Esophagus muscularis mucosa (tissue), 4 donors: ENCODE measurements at regions of chr3 and their contacts with region 1.

Region 1: DNA sequence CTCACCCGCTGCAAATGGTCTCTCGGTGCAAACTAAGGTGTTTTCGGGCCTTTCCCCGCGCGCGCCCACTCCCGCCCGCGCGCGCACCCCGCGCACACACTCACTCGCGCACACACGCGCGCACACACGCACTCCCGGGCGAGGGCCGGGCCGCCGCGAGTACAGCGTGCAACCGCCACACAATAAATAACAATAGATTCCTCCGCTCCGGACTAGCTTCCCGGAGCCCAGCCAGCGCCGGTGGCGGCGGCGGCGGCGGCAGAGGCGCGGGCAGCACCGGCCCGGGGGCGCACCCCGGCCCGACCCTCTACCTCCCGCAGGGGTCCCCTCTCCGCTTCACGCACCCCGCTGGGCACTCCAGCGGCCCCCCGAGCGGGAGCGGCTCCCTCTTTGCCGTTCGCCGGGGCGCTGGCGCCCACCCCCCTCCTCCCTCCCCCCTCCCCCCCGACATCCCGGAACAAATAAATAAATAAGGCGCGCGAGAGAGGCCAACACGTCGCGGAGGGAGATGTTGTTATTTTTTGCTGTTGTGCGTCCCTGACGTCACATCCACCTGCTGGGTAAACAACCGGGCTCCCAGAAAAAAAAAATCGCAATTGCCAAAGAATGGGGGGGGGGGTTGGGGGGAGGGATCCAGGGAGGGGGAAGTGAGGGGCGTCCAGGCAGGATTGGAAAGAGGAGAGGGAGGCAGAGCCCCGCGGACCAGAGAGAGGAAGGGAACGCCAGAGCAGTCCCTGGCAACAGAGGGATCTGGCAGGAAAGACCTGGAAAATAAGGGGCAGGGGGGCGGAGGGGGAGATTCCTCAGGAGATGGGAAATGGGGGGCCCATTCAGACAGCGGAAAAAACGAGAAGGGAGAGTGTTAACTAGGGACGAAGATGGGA is at the start of gene FOXP1:
- DNase-seq: peak; percentile 92
- H3K4me3 ChIP-seq: peak within 1 kb of the TSS; percentile 86 to 98 (median 90)
- H3K27ac ChIP-seq: peak within 1 kb of the TSS; percentile 96 to 100 (median 98)
- H3K4me1 ChIP-seq: peaks cover 5 to 48% (median 37%) of the 10 kb centered on the region in 4 donors
- H3K27me3 ChIP-seq: no peaks in the 10 kb centered on the region
- CTCF ChIP-seq: no peak
- EP300 ChIP-seq: no peak
- POLR2A ChIP-seq: peak; percentile 15
- total RNA-seq, gene FOXP1: 181 to 225 (median 205) TPM

Region 2: DNA sequence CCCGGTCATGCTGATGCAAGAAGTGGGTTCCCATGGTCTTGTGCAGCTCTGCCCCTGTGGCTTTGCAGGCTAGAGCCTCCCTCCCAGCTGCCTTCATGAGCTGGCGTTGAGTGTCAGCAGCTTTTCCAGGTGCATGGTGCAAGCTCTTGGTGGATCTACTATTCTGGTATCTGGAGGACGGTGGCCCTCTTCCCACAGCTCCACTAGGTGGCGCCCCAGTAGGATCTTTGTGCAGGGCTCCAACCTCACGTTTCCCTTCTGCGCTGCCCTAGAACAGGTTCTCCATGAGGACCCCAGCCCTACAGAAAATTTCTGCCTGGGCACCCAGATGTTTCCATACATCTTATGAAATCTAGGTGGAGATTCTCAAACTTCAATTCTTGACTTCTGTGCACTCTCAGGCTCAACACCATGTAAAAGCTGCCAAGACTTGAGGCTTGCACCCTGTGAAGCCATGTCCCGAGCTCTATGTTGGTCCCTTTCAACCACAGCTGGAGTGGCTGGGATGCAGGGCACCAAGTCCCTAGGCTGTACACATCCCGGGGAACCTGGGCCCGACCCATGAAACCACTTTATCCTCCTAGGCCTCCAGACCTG is 1033.0 kb before region 1 on chr3:
- intact Hi-C with region 1: loop called (anchors 5 kb)
- DNase-seq: no peak
- H3K4me3 ChIP-seq: no peak overlapping the region
- H3K27ac ChIP-seq: no peak overlapping the region
- H3K4me1 ChIP-seq: peaks cover 0 to 16% (median 3%) of the 10 kb centered on the region in 4 donors
- H3K27me3 ChIP-seq: no peaks in the 10 kb centered on the region
- CTCF ChIP-seq: peak; percentile 32 to 68 (median 48)
- EP300 ChIP-seq: no peak
- POLR2A ChIP-seq: no peak

Region 3: DNA sequence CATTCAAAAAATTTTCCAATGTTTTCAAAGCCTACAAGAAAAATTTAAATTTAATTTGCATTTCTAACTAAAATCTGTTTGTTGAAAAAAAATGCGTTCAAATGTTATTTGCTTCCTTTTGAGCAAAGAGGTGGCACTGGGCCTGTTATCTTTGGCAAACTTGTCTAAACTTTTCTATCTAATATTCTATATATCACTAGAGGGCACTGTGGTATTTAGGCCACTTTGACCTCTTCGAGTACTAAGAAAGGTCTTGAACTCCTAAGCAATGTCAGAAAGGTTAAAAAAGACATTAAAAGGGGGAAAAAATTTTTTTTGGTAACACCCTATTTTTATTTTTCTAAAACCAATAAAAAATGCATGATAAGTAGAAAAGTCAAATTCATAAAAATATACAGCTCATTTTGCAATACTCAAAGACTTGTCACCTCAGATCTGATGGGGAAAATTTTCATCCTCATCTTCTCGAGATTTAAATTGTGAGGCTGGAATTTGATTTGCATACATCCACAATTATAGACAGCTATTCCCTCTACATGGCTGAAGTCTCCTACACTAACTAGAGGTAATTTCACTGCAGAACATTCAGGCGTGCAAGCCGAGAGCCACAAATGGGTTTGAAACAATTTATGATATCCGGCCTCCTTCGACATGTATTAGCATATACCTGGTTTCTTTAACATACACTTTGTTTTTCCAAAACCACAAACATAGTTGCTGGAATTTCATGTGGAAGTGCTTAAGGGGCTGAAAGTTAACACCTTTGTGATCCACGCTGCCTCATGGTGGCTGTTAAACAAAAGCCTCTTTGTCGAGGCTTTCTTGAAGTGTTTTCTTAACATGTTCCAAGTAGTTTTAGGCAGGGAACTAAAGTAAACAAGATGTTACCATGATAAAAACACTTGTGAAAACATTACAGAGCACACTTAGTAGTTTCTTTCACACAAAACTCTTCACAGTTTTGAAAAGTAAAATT is 576.7 kb before region 1 on chr3:
- intact Hi-C with region 1: loop called (anchors 10 kb)
- DNase-seq: no peak
- H3K4me3 ChIP-seq: no peak overlapping the region
- H3K27ac ChIP-seq: peak overlapping the region; percentile 63 to 78 (median 74)
- H3K4me1 ChIP-seq: peaks cover 48 to 99% (median 97%) of the 10 kb centered on the region in 4 donors
- H3K27me3 ChIP-seq: no peaks in the 10 kb centered on the region
- CTCF ChIP-seq: peak; percentile 31 to 49 (median 40)
- EP300 ChIP-seq: no peak
- POLR2A ChIP-seq: no peak

Region 4: GRCh38 chr3:71130471-71131374 is 453.1 kb before region 1 on chr3:
- intact Hi-C with region 1: loop called (anchors 5 kb)
- DNase-seq: peak; percentile 94
- H3K4me3 ChIP-seq: peak overlapping the region; percentile 44 to 60 (median 57)
- H3K27ac ChIP-seq: peak overlapping the region; percentile 80 to 91 (median 82)
- H3K4me1 ChIP-seq: peaks cover 55 to 78% (median 74%) of the 10 kb centered on the region in 4 donors
- H3K27me3 ChIP-seq: no peaks in the 10 kb centered on the region
- CTCF ChIP-seq: no peak
- EP300 ChIP-seq: no peak
- POLR2A ChIP-seq: no peak

Region 5: GRCh38 chr3:71305231-71306206 is 278.3 kb before region 1 on chr3:
- intact Hi-C with region 1: loop called (anchors 5 kb)
- DNase-seq: no peak
- H3K4me3 ChIP-seq: peak overlapping the region; percentile 40 to 56 (median 50)
- H3K27ac ChIP-seq: peak overlapping the region; percentile 78 to 83 (median 82)
- H3K4me1 ChIP-seq: peaks cover 18 to 88% (median 84%) of the 10 kb centered on the region in 4 donors
- H3K27me3 ChIP-seq: no peaks in the 10 kb centered on the region
- CTCF ChIP-seq: peak in 1 of 3 experiments; percentile 5
- EP300 ChIP-seq: no peak
- POLR2A ChIP-seq: no peak

Region 6: GRCh38 chr3:71542521-71543370 is 41.1 kb before region 1 on chr3:
- intact Hi-C with region 1: loop called (anchors 5 kb)
- DNase-seq: peak; percentile 96
- H3K4me3 ChIP-seq: peak overlapping the region; percentile 20 to 43 (median 41)
- H3K27ac ChIP-seq: peak overlapping the region; percentile 78
- H3K4me1 ChIP-seq: peaks cover 20 to 69% (median 56%) of the 10 kb centered on the region in 4 donors
- H3K27me3 ChIP-seq: no peaks in the 10 kb centered on the region
- CTCF ChIP-seq: no peak
- EP300 ChIP-seq: no peak
- POLR2A ChIP-seq: no peak

Region 7: DNA sequence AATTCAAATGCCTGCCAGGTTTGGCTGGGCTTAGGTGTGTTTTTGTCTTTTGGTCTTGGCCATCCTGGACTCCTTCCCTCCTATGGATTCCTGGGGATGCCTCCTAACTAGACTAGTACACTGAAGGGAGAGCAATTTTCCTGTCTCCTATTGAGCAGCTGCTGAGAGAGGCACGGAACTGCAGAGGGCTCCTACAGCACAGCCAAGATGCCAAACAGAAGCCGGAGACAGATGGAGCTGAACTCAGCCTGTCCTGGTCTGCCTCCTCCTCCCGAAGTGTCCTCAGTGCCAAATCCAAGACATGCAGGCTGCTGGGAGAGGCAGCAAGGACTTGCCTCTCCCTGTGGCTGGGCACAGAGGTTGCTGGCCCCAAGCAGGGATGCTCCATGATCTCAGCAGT is 457.7 kb after region 1 on chr3:
- intact Hi-C with region 1: no loop called
- DNase-seq: no peak
- H3K4me3 ChIP-seq: no peak overlapping the region
- H3K27ac ChIP-seq: no peak overlapping the region
- H3K4me1 ChIP-seq: peaks cover 5 to 24% (median 18%) of the 10 kb centered on the region in 4 donors
- H3K27me3 ChIP-seq: no peaks in the 10 kb centered on the region
- CTCF ChIP-seq: peak in 2 of 3 experiments; percentile 15 to 28
- EP300 ChIP-seq: no peak
- POLR2A ChIP-seq: no peak